B cell (primary cell): ENCODE measurements at regions of chr14 and their contacts with region 1.

Region 1: GRCh38 chr14:68248481-68249255 is 429.1 kb downstream of the RAD51B start:
- DNase-seq: peak; percentile 80
- ATAC-seq: peak; percentile 83
- H3K4me3 ChIP-seq: no peak overlapping the region
- H3K4me3 Mint-ChIP-seq: peak overlapping the region; percentile 5
- H3K27ac ChIP-seq: peak overlapping the region; percentile 39 to 73
- H3K27ac Mint-ChIP-seq: peak overlapping the region; percentile 88
- H3K4me1 ChIP-seq: peaks cover 40 to 54% of the 10 kb centered on the region in 2 donors
- H3K4me1 Mint-ChIP-seq: peaks cover 65% of the 10 kb centered on the region
- H3K27me3 ChIP-seq: no peaks in the 10 kb centered on the region
- H3K27me3 Mint-ChIP-seq: no peaks in the 10 kb centered on the region
- CTCF ChIP-seq: peak; percentile 85

Region 2: DNA sequence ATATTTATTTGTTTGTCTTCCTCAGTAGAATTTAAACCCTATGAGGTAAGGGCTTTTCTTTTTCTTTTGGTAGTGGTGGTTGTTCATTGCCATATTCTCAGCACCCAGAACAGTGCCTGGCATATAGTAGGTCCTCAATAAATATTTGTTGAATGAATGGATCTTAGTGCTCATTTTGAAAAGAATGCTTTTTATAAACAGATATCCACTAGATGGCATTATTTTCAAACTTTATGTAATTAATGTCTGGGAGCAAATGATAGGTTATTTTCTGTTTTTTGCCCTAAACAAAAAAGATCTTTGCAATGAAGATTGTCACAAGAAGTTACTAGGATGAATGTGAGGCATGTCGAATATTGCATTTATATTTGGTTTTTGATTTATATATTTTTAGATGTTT is 365.0 kb before region 1 on chr14:
- CTCF ChIA-PET with region 1: no interaction called
- POLR2A ChIA-PET with region 1: no interaction called
- intact Hi-C with region 1: no loop called
- DNase-seq: peak; percentile 10
- ATAC-seq: no peak
- H3K4me3 ChIP-seq: no peak overlapping the region
- H3K4me3 Mint-ChIP-seq: no peak overlapping the region
- H3K27ac ChIP-seq: no peak overlapping the region
- H3K27ac Mint-ChIP-seq: no peak overlapping the region
- H3K4me1 ChIP-seq: peaks cover 0 to 3% of the 10 kb centered on the region in 2 donors
- H3K4me1 Mint-ChIP-seq: peaks cover 6% of the 10 kb centered on the region
- H3K27me3 ChIP-seq: no peaks in the 10 kb centered on the region
- H3K27me3 Mint-ChIP-seq: no peaks in the 10 kb centered on the region
- CTCF ChIP-seq: peak; percentile 33

Region 3: GRCh38 chr14:68268197-68268596 is 19.5 kb after region 1 on chr14:
- CTCF ChIA-PET with region 1: interaction called, 38 read pairs
- POLR2A ChIA-PET with region 1: interaction called, 6 read pairs
- intact Hi-C with region 1: loop called (anchors 1 kb)
- DNase-seq: peak; percentile 92
- ATAC-seq: peak; percentile 71
- H3K4me3 ChIP-seq: peak overlapping the region in 1 of 5 experiments; percentile 14
- H3K4me3 Mint-ChIP-seq: peak overlapping the region; percentile 72
- H3K27ac ChIP-seq: peak overlapping the region; percentile 78 to 94
- H3K27ac Mint-ChIP-seq: peak overlapping the region; percentile 95
- H3K4me1 ChIP-seq: peaks cover 78 to 89% of the 10 kb centered on the region in 2 donors
- H3K4me1 Mint-ChIP-seq: peaks cover 80% of the 10 kb centered on the region
- H3K27me3 ChIP-seq: no peaks in the 10 kb centered on the region
- H3K27me3 Mint-ChIP-seq: no peaks in the 10 kb centered on the region
- CTCF ChIP-seq: no peak

Region 4: DNA sequence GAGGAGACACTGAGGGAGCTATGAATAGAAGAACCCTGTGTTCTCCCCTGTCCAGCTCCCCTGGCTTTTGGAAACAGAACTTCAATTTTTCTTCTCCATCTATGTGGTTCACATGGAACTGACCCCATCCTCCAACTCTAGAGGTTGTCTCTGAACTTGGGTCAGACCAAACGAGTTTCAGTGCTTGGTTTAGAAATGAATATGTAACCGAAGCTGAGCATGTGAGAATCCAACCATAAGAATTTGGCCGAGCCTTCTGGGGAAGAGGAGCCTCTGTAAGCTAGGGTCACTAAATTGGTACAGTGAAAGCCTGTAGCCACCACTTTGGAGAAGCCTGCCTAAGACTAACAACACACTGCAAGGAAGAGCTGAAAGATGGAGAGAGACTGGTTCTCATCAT is 79.8 kb after region 1 on chr14:
- CTCF ChIA-PET with region 1: interaction called, 6 read pairs
- POLR2A ChIA-PET with region 1: no interaction called
- intact Hi-C with region 1: loop called (anchors 5 kb)
- DNase-seq: no peak
- ATAC-seq: no peak
- H3K4me3 ChIP-seq: no peak overlapping the region
- H3K4me3 Mint-ChIP-seq: no peak overlapping the region
- H3K27ac ChIP-seq: no peak overlapping the region
- H3K27ac Mint-ChIP-seq: no peak overlapping the region
- H3K4me1 ChIP-seq: peaks cover 47 to 53% of the 10 kb centered on the region in 2 donors
- H3K4me1 Mint-ChIP-seq: peaks cover 59% of the 10 kb centered on the region
- H3K27me3 ChIP-seq: no peaks in the 10 kb centered on the region
- H3K27me3 Mint-ChIP-seq: no peaks in the 10 kb centered on the region
- CTCF ChIP-seq: no peak

Region 5: DNA sequence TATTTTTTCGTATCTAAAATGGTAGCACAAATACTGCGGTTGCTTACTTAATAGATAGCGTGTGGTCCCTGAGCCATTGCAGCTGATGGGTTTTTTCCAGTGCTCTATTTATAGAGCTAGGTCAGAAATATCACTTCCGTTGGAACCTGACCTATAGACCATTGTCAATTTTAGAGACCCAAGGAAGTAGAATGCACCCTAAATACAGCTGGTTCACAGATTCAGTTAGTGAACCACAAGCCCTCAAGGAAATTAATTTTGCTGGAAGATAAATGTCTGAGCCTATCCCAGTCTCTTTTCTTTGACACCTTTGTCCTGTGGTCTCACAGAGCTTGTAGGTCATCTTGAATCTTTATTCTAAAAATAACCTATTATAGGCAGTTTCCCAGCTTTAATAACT is 153.2 kb after region 1 on chr14:
- CTCF ChIA-PET with region 1: interaction called, 26 read pairs
- POLR2A ChIA-PET with region 1: interaction called, 4 read pairs
- intact Hi-C with region 1: loop called (anchors 1 kb)
- DNase-seq: peak; percentile 71
- ATAC-seq: peak; percentile 59
- H3K4me3 ChIP-seq: peak overlapping the region in 1 of 5 experiments; percentile 57
- H3K4me3 Mint-ChIP-seq: peak overlapping the region; percentile 82
- H3K27ac ChIP-seq: peak overlapping the region; percentile 91 to 96
- H3K27ac Mint-ChIP-seq: peak overlapping the region; percentile 97
- H3K4me1 ChIP-seq: peaks cover 91 to 94% of the 10 kb centered on the region in 2 donors
- H3K4me1 Mint-ChIP-seq: peaks cover 90% of the 10 kb centered on the region
- H3K27me3 ChIP-seq: no peaks in the 10 kb centered on the region
- H3K27me3 Mint-ChIP-seq: no peaks in the 10 kb centered on the region
- CTCF ChIP-seq: no peak

Region 6: DNA sequence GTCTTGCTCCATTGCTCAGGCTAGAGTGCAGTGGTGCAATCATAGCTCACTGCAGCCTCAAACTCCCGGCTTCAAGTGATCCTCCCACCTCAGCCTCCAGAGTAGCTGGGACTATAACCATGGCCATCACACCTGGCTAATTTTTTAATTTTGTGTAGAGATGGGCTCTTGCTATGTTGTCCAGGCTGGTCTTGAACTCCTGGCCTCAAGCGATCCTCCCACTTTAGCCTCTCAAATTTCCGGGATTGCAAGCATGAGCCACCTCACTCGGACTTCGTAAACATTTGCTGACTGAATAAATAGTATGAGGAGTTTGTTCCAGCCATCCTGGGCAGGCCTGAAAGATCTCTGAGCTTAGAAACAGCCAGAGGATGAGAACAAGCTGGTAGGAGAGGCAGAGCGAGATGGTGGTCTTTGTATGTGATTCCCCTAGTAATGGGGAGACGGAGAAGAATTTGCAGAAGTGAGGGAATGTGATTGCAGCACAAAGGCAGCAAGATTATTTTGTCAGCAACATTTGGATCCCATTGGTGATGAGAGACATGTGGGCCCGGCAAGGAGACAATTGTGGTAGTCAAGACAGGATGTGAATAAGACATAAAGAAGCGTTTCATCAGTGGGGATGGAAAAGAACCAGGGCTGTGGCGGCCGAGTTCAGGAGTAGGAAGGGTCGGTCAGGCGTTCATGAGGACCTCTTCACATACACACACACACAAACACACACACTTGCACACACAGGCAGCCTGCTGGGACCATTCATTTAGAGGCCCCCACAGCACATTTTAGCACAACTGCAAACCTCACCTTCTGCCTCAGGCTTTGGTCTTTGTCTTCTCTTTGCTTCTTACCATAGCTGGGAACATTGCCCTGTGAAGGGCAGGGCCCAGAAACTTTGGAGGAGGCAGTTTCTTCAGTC is 388.7 kb after region 1 on chr14:
- CTCF ChIA-PET with region 1: no interaction called
- POLR2A ChIA-PET with region 1: no interaction called
- intact Hi-C with region 1: no loop called
- DNase-seq: no peak
- ATAC-seq: no peak
- H3K4me3 ChIP-seq: no peak overlapping the region
- H3K4me3 Mint-ChIP-seq: no peak overlapping the region
- H3K27ac ChIP-seq: no peak overlapping the region
- H3K27ac Mint-ChIP-seq: no peak overlapping the region
- H3K4me1 ChIP-seq: peaks cover 12 to 19% of the 10 kb centered on the region in 2 donors
- H3K4me1 Mint-ChIP-seq: peaks cover 13% of the 10 kb centered on the region
- H3K27me3 ChIP-seq: no peaks in the 10 kb centered on the region
- H3K27me3 Mint-ChIP-seq: no peaks in the 10 kb centered on the region
- CTCF ChIP-seq: no peak

Region 7: GRCh38 chr14:68655911-68656360 is 407.3 kb after region 1 on chr14:
- CTCF ChIA-PET with region 1: interaction called, 13 read pairs
- POLR2A ChIA-PET with region 1: no interaction called
- intact Hi-C with region 1: no loop called
- DNase-seq: no peak
- ATAC-seq: no peak
- H3K4me3 ChIP-seq: no peak overlapping the region
- H3K4me3 Mint-ChIP-seq: no peak overlapping the region
- H3K27ac ChIP-seq: no peak overlapping the region
- H3K27ac Mint-ChIP-seq: no peak overlapping the region
- H3K4me1 ChIP-seq: peaks cover 16 to 20% of the 10 kb centered on the region in 2 donors
- H3K4me1 Mint-ChIP-seq: peaks cover 15% of the 10 kb centered on the region
- H3K27me3 ChIP-seq: no peaks in the 10 kb centered on the region
- H3K27me3 Mint-ChIP-seq: no peaks in the 10 kb centered on the region
- CTCF ChIP-seq: no peak

Region 8: GRCh38 chr14:68795597-68796417 is 547.1 kb after region 1 on chr14:
- CTCF ChIA-PET with region 1: interaction called, 252 read pairs
- POLR2A ChIA-PET with region 1: interaction called, 57 read pairs
- intact Hi-C with region 1: no loop called
- DNase-seq: peak; percentile 96
- ATAC-seq: peak; percentile 39
- H3K4me3 ChIP-seq: peak overlapping the region; percentile 59 to 100 (median 94)
- H3K4me3 Mint-ChIP-seq: peak overlapping the region; percentile 97
- H3K27ac ChIP-seq: peak overlapping the region; percentile 100
- H3K27ac Mint-ChIP-seq: peak overlapping the region; percentile 100
- H3K4me1 ChIP-seq: peaks cover 30 to 38% of the 10 kb centered on the region in 2 donors
- H3K4me1 Mint-ChIP-seq: peaks cover 36% of the 10 kb centered on the region
- H3K27me3 ChIP-seq: no peaks in the 10 kb centered on the region
- H3K27me3 Mint-ChIP-seq: no peaks in the 10 kb centered on the region
- CTCF ChIP-seq: peak; percentile 62